ENCODE measurements at regions of chr3 and their contacts with region 1.

Region 1: GRCh38 chr3:171149526-171150116 is 123.1 kb upstream of the SLC2A2 start:
- DNase-seq: peak; percentile 37
- H3K4me3 ChIP-seq: no peak overlapping the region
- H3K27ac ChIP-seq: no peak overlapping the region; a peak in 1 of 4 replicates
- H3K4me1 ChIP-seq: peaks cover 0 to 10% of the 10 kb centered on the region in 2 experiments; a peak in 1 of 4 replicates
- H3K27me3 ChIP-seq: no peaks in the 10 kb centered on the region
- CTCF ChIP-seq: no peak
- EP300 ChIP-seq: no peak
- RAD21 ChIP-seq: no peak

Region 2: DNA sequence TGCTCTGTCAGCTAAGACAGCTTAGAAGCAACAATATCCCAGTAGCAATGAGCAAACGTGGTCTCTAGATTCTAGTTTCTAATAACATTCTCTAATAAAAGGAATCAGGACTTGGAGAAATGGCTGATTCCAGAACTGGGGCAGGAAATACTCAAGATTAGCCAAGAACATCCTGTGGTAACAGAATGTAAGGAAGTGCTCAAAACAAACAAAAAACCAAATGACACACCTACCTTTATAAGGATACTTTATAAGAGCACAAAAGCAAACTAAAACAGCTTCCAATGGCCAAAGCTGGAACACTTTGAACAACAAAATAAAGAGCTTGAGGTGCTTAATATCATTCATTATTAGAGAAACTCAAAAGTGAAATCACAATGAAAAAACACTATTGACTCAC is 208.1 kb before region 1 on chr3:
- CTCF ChIA-PET with region 1: no interaction called
- POLR2A ChIA-PET with region 1: no interaction called
- DNase-seq: no peak
- H3K4me3 ChIP-seq: no peak overlapping the region
- H3K27ac ChIP-seq: no peak overlapping the region
- H3K4me1 ChIP-seq: no peaks in the 10 kb centered on the region
- H3K27me3 ChIP-seq: no peaks in the 10 kb centered on the region
- CTCF ChIP-seq: no peak
- EP300 ChIP-seq: no peak
- RAD21 ChIP-seq: no peak

Region 3: DNA sequence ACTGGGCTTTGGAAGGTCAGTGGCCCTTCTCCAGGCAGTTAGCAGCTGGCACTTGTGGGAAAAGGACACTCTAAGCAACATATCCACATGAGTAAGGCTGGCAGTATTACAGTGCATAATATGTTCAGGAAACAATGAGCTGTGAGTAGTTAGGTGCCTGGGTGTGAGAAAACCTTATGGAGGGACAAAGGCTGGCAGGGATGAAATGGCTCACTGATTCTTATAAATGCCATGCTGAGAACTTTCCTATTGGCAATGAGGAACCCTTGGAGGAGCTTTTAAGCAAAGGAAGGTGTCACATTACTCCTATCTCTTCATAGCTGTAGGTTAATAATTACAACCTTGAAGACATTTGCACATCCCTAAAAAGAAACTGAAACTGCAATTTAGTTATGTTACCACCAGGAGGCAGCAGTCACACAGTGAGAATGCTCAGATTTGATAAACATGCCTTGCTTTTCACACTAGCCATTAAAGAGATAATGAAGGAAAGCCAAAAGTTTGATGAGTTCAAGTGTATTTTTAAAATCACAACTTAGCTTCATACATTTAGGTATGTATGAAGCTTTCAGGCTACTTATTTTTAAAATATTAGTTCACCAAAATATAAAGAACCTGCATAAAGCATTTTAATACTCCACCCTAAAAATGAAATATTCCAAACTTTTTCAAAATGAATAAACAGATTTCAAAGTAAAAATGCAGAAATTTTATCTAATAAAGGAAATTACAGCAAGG is 13.5 kb after region 1 on chr3:
- CTCF ChIA-PET with region 1: interaction called, 10 read pairs
- POLR2A ChIA-PET with region 1: no interaction called
- DNase-seq: no peak
- H3K4me3 ChIP-seq: peak overlapping the region in 1 of 2 experiments; percentile 10; a peak in 1 of 4 replicates
- H3K27ac ChIP-seq: no peak overlapping the region
- H3K4me1 ChIP-seq: no peaks in the 10 kb centered on the region; a peak in 1 of 4 replicates
- H3K27me3 ChIP-seq: no peaks in the 10 kb centered on the region
- CTCF ChIP-seq: peak; percentile 63
- EP300 ChIP-seq: no peak
- RAD21 ChIP-seq: peak; percentile 28; the same call in 1 of the 2 replicates

Measured in SK-N-SH (cell line).